Esophagus squamous epithelium (tissue), 5 donors: ENCODE measurements at regions of chr13 and their contacts with region 1.

Region 1: GRCh38 chr13:20101484-20102316 is 59.2 kb downstream of the GJA3 start:
- DNase-seq: no peak
- H3K4me3 ChIP-seq: no peak overlapping the region
- H3K27ac ChIP-seq: no peak overlapping the region
- H3K4me1 ChIP-seq: peaks cover 0 to 24% (median 2%) of the 10 kb centered on the region in 3 donors
- H3K27me3 ChIP-seq: peaks cover 0 to 50% (median 0%) of the 10 kb centered on the region in 4 donors
- CTCF ChIP-seq: no peak
- POLR2A ChIP-seq: no peak

Region 2: GRCh38 chr13:19805765-19806164 is 295.9 kb before region 1 on chr13:
- intact Hi-C with region 1: no loop called
- DNase-seq: no peak
- H3K4me3 ChIP-seq: no peak overlapping the region
- H3K27ac ChIP-seq: no peak overlapping the region
- H3K4me1 ChIP-seq: no peaks in the 10 kb centered on the region
- H3K27me3 ChIP-seq: no peaks in the 10 kb centered on the region
- CTCF ChIP-seq: no peak
- POLR2A ChIP-seq: no peak

Region 3: DNA sequence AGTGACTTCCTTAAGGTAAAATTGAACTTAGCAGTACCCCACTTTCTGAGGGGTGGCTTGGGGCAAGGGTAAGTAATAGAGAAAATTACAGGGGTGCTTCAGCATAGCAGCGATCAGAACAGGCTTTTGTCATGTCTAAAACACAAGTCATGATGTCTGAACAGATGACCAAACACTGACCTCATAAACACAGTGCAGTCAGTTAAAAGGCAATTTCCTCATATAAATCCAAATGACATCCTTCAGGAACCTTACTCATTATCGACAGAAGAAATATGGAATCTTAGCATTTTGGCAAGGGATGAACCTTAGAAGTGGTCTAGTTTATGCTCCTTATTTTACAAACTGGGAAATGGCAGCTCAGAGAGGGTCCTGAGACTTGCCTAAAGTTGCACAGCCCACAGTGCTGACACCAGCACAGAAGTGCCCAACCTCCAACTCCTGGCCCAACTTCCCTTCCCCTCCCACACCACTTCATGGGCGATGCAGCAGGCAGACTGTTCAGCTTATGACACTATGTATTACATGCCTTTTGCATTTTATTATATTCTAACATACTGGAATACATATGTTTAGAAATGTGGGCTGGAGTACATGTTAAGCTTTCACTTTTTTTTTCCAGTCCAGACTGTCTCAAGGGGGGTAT is 55.6 kb after region 1 on chr13:
- intact Hi-C with region 1: loop called (anchors 10 kb)
- DNase-seq: no peak
- H3K4me3 ChIP-seq: no peak overlapping the region
- H3K27ac ChIP-seq: no peak overlapping the region
- H3K4me1 ChIP-seq: peaks cover 16 to 22% (median 18%) of the 10 kb centered on the region in 3 donors
- H3K27me3 ChIP-seq: peaks cover 0 to 90% (median 6%) of the 10 kb centered on the region in 4 donors
- CTCF ChIP-seq: no peak
- POLR2A ChIP-seq: no peak

Region 4: DNA sequence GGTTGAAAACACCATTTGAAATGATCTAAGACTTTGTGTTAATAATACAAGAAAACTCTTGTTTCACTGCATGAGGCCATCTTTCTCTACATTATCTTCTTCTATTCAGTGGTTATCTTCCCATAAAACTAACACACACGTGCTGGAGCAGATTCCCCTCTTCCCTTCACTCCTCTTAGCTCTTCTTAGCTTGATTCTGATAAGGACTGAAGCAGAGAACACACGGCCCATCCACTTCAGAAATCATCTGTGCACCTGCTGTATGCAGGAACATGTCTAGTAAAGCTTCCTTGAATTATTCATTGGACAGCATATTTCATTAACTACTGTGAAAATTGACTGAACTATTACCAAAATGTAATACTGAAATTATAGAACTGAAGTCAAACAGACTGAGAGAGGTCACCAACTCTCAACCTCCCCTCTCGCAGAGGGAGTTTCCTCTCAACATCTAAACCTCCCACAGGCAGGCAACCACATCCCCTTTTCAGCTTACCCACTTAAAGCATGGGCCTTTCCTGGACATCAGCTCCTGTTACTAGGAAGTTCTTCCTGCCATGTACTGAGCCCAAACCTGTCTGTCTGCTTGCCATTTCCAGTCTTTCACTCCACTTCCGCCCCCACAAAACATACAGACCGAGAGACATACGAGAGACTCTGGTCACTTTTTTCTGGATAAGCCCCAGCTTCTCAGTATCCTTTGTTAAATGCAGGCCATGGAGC is 310.1 kb after region 1 on chr13:
- intact Hi-C with region 1: no loop called
- DNase-seq: no peak
- H3K4me3 ChIP-seq: no peak overlapping the region
- H3K27ac ChIP-seq: no peak overlapping the region
- H3K4me1 ChIP-seq: peaks cover 5 to 62% (median 21%) of the 10 kb centered on the region in 3 donors
- H3K27me3 ChIP-seq: no peaks in the 10 kb centered on the region
- CTCF ChIP-seq: no peak
- POLR2A ChIP-seq: no peak